ENCODE measurements at regions of chr14 and their contacts with region 1.

Region 1: GRCh38 chr14:88562831-88563686 is at the start of gene ZC3H14:
- DNase-seq: peak; percentile 86
- H3K4me3 Mint-ChIP-seq: peak within 1 kb of the TSS; percentile 96
- H3K27ac Mint-ChIP-seq: peak within 1 kb of the TSS; percentile 90
- H3K4me1 Mint-ChIP-seq: peaks cover 28% of the 10 kb centered on the region
- H3K27me3 Mint-ChIP-seq: peaks cover 23% of the 10 kb centered on the region
- total RNA-seq, gene ZC3H14: 59.8 and 60.3 TPM in 2 replicates

Region 2: DNA sequence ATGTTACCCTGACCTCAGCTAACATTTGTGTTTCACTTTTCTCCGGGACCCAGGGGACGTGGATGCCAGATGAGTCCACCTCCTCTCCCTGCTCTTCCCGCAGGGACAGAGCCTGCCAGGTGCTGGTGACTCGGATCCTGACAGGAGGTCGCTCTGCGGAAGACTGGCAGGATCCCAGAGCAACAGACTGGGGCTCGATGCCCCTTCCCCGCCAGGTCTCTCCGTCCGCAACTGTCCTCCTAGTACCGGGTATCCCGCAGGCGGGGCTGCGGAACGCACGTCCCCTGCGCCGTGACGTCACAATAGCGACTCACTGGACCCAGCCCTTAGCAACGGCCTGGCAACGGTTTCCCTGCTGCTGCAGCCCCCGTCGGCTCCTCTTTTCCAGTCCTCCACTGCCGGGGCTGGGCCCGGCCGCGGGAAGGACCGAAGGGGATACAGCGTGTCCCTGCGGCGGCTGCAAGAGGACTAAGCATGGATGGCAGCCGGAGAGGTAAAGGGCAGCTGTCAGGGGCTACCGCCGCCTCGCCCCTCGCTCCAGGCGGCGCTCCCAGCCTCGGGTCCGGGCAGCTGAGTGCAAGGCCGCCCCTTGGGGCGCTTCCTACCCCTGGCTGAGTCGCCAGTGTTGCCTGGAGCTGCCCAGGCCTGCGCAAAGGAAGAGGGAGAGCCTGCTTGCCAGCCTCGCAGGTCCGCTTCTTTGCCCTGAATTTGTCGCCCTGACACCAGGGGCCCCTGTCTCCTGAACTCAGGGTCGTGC is 177.5 kb before region 1 on chr14 and contains the start of gene SPATA7:
- intact Hi-C with region 1: loop called (anchors 5 kb)
- DNase-seq: peak; percentile 79
- H3K4me3 Mint-ChIP-seq: peak within 1 kb of the TSS; percentile 96
- H3K27ac Mint-ChIP-seq: peak within 1 kb of the TSS; percentile 72
- H3K4me1 Mint-ChIP-seq: peaks cover 19% of the 10 kb centered on the region
- H3K27me3 Mint-ChIP-seq: peaks cover 21% of the 10 kb centered on the region
- total RNA-seq, gene SPATA7: 2.3 and 3.1 TPM in 2 replicates

Region 3: DNA sequence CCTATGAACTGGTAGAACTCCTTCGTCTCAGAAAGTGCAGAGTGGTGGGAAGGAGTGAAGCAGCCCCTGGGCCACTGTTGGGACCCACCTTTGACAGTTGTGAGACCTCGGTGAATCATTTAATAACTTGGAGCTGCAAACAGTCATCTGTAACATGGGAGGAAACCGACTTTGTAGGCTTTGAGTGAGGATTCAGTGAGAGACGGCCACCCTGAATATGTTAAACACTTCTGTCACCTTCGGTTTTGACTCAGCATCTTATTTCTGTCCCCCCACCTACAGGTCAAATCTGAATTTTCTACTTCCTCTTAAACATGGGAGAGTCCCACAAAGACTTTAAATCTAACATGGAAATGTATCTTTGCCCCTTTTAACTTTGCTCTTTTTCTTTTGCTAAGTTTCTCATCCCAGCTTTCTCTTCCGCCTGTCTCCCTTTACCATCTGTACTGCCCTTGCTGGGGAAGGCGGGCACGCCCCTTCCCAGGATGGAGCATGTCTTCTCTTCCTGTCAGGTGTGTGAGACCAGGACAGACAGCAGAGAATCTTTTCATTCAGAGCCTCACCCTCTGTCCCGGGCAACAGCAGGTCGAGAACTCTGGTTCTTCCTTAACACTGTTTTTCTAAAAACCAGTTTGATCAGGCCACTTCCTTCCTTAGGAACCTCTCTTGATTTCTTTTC is 36.8 kb after region 1 on chr14:
- intact Hi-C with region 1: loop called (anchors 5 kb)
- DNase-seq: no peak
- H3K4me3 Mint-ChIP-seq: peak overlapping the region; percentile 56
- H3K27ac Mint-ChIP-seq: peak overlapping the region; percentile 80
- H3K4me1 Mint-ChIP-seq: peaks cover 44% of the 10 kb centered on the region
- H3K27me3 Mint-ChIP-seq: no peaks in the 10 kb centered on the region

Region 4: GRCh38 chr14:88688386-88688785 is 125.3 kb after region 1 on chr14:
- intact Hi-C with region 1: no loop called
- DNase-seq: no peak
- H3K4me3 Mint-ChIP-seq: no peak overlapping the region
- H3K27ac Mint-ChIP-seq: no peak overlapping the region
- H3K4me1 Mint-ChIP-seq: no peaks in the 10 kb centered on the region
- H3K27me3 Mint-ChIP-seq: no peaks in the 10 kb centered on the region

Region 5: DNA sequence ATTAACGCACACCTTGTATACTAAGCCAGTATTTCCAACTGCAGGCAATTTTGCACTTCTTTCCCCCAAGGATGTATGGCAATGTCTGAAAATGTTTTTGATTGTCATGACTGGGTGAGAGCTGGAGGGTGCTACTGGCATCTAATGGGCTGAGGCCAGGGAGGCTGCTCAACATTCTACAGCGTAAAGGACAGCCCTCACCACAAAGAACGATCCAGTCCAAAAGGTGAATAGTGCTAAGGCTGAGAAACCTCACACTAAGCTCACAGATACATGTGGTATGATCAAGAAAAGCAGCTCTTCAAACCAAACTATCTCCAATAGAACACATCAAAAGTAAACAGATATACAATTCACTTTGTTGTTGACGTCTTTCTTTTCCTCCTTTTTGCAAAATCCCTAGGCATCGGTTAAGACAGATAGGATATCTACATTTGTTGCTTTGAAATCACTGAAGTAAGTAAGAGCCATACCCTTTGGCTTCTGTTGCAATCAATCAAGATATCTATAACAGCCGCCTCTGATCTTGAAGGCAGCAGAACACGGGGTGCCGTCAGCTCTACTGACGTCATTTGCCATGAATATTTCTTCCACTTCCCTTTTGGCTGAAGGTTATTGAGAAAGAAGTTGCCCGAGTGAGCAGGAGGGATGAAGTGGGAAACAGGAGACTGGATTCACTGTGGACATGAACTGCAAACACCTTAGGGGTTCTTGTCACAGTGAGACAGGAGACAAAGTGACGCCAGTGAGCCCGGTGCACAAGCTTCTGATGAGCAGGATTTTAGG is 635.7 kb after region 1 on chr14:
- intact Hi-C with region 1: no loop called
- DNase-seq: no peak
- H3K4me3 Mint-ChIP-seq: no peak overlapping the region
- H3K27ac Mint-ChIP-seq: no peak overlapping the region
- H3K4me1 Mint-ChIP-seq: peaks cover 27% of the 10 kb centered on the region
- H3K27me3 Mint-ChIP-seq: no peaks in the 10 kb centered on the region

Region 6: GRCh38 chr14:89954070-89955028 is 1391.3 kb after region 1 on chr14 and contains the start of gene EFCAB11:
- intact Hi-C with region 1: loop called (anchors 10 kb)
- DNase-seq: peak; percentile 96
- H3K4me3 Mint-ChIP-seq: peak within 1 kb of the TSS; percentile 87
- H3K27ac Mint-ChIP-seq: peak within 1 kb of the TSS; percentile 81
- H3K4me1 Mint-ChIP-seq: peaks cover 43% of the 10 kb centered on the region
- H3K27me3 Mint-ChIP-seq: no peaks in the 10 kb centered on the region
- total RNA-seq, gene EFCAB11: 7.1 and 9.0 TPM in 2 replicates

Measured in activated T-helper 2 cell treated with anti-CD3 and anti-CD28 coated beads, Interferon-gamma antibody, Interleukin-2, Interleukin-4, amounts not matched to agents 10 μg/mL and 5 μg/mL and 100 μg/mL, durations not matched to agents 14 hours and 24 hours and 36 hours (primary cell).